Panc1 (cell line): ENCODE measurements at regions of chr19 and their contacts with region 1.

Region 1: DNA sequence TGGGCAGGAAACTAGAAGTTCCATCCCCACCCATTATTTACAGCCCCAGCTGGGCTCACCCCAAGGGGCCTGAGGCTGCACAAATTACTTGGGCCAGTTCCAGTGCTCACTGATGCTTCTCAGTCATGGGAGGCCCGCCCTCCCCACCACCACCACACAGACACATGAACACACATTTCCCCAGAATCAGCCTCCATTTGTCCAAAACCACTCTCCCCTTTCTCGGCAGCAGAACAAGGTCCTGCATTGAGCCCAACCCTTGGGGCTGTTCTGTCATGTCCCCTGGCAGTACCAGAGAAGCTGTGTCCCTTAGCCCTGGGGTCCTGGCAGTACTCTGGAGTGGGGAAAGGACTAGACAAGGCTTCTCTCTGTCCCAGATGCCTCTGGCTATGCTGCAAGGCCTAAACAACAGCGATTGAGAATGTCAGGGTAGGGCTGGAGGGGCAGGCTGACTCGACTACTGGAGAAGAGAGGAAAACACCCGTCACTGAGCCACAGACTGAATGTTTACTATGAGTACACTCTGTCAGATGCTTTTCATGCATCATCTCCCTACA is 21.8 kb downstream of the SAMD4B start:
- DNase-seq: no peak
- ATAC-seq: peak; percentile 1; the same call in 1 of the 2 replicates
- H3K4me3 ChIP-seq: no peak overlapping the region
- H3K27ac ChIP-seq: no peak overlapping the region
- H3K4me1 ChIP-seq: peaks cover 5% of the 10 kb centered on the region; the same call in 1 of the 2 replicates
- H3K27me3 ChIP-seq: no peaks in the 10 kb centered on the region
- CTCF ChIP-seq: no peak

Region 2: DNA sequence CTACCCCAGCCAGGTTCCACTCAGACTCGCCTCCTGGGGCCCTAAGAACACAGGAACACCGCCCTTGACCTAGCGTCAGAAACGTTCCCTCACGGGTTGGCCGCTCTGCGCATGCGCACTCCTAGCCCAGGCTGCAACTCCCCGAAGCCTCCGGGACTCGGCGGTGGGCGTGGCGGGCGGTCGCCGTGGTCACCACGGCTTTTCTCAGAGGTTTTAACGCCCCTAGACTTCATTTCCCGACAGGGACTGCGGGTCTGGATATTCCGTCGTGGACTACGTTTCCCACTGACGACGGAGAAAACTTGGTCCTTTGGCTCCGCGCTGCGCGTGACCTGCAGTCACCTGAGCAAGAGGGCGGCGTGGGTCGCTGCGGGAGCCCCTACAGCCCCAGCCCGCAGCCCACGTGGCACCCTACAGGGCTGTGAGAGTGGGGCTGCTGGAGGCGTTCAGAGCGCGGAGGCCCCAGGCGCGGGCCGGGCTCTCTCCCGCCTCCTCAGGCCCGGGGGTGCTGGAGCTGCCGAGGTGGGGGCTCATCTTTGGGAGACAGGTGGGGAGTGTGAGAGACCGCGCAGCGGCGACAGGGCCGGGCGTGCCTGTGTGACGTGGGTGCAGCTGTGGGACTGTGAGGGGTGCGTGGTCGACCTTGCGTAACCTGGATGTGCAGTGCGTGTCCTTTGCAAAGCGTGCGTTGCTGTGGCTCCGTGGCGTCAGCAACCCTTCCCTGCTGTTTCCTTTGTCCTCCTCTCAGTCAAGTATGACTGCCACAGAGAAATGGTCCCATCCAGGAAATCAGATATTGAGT is 1546.6 kb before region 1 on chr19:
- CTCF ChIA-PET with region 1: no interaction called
- POLR2A ChIA-PET with region 1: no interaction called
- in situ Hi-C with region 1: no loop called
- intact Hi-C with region 1: no loop called
- DNase-seq: no peak
- ATAC-seq: no peak
- H3K4me3 ChIP-seq: no peak overlapping the region; a peak in 1 of 4 replicates
- H3K27ac ChIP-seq: no peak overlapping the region
- H3K4me1 ChIP-seq: no peaks in the 10 kb centered on the region
- H3K27me3 ChIP-seq: no peaks in the 10 kb centered on the region
- CTCF ChIP-seq: no peak

Region 3: GRCh38 chr19:39351537-39352064 is 12.4 kb before region 1 on chr19:
- CTCF ChIA-PET with region 1: interaction called, 9 read pairs
- POLR2A ChIA-PET with region 1: interaction called, 67 read pairs
- in situ Hi-C with region 1: no loop called
- intact Hi-C with region 1: no loop called
- DNase-seq: no peak
- ATAC-seq: peak; percentile 6
- H3K4me3 ChIP-seq: no peak overlapping the region
- H3K27ac ChIP-seq: no peak overlapping the region
- H3K4me1 ChIP-seq: no peaks in the 10 kb centered on the region
- H3K27me3 ChIP-seq: no peaks in the 10 kb centered on the region
- CTCF ChIP-seq: no peak